OCI-LY7 (cell line): ENCODE measurements at regions of chr1 and their contacts with region 1.

Region 1: GRCh38 chr1:220957233-220957605 is 78.0 kb downstream of the HLX start:
- DNase-seq: no peak
- H3K4me3 ChIP-seq: no peak overlapping the region
- H3K27ac ChIP-seq: no peak overlapping the region
- H3K4me1 ChIP-seq: no peaks in the 10 kb centered on the region
- CTCF ChIP-seq: no peak

Region 2: DNA sequence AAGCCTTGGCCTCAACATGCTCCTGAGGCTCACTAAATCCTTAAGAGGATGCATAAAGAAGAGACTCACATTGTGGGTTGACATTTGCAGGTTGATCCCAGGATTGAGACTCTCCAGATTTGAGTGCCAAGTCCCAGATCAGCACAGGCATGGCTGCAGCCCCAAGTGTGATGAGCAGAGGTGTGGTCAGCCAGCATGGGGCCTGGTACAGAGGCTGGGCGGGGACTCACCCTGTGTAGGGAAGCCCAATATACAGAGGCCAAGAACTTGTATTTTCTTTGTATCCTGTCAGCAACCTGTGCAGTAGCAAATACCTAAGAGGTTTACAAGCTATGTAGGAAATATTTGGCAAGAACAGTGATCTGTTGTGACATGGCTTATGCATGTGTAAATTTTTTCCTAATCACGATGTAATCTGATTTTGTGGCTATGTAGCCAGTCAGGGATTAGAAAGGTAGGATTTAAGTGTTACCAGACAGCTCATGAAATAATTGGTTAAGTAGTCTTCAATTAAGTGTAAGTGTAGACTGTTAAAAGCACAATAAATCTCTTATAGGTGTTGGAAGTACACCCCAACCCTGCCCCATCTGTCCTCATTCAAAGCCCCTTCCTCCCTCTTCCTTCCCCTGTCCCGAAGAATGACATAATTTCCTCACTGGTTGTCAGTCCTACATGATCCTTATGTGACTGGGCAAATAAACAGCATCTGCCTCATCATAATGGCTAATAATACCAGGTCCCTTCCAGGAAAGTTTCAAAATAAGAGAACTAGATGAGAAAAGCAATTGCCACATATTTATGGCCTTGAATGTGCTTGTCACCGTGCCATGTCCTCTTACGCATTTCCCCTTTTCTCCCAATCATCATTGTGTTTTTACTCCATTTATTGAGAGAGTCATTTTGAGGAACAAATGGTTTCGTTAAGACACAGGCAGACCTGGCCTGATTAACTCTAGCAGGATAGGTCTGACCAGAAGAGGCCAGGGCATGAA is 42.9 kb after region 1 on chr1:
- CTCF ChIA-PET with region 1: no interaction called
- POLR2A ChIA-PET with region 1: no interaction called
- intact Hi-C with region 1: loop called (anchors 2 kb)
- DNase-seq: no peak
- H3K4me3 ChIP-seq: no peak overlapping the region
- H3K27ac ChIP-seq: no peak overlapping the region
- H3K4me1 ChIP-seq: no peaks in the 10 kb centered on the region
- CTCF ChIP-seq: no peak

Region 3: DNA sequence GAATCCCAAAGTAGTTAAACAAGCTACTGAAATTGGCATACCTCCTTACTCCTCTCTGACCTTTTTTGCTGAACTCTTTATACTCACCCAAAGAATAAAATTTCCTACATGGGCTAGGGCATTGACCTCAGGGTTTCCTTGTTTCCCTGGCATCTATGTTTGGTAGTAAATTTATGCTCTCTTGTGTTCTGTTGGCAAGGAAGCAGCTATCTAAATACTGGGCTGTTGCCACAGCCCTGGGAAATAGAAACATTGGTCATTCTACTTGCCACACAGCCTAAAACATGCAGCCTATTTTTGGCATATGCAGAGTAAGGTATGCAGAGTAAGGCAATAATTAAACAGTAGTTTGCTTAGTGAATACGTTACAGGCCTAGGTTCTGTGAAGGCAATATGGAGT is 273.4 kb after region 1 on chr1:
- CTCF ChIA-PET with region 1: no interaction called
- POLR2A ChIA-PET with region 1: interaction called, 10 read pairs
- intact Hi-C with region 1: no loop called
- DNase-seq: no peak
- H3K4me3 ChIP-seq: no peak overlapping the region
- H3K27ac ChIP-seq: no peak overlapping the region
- H3K4me1 ChIP-seq: no peaks in the 10 kb centered on the region
- CTCF ChIP-seq: no peak